Gastrocnemius medialis (tissue), 4 donors: ENCODE measurements at regions of chr5 and their contacts with region 1.

Region 1: DNA sequence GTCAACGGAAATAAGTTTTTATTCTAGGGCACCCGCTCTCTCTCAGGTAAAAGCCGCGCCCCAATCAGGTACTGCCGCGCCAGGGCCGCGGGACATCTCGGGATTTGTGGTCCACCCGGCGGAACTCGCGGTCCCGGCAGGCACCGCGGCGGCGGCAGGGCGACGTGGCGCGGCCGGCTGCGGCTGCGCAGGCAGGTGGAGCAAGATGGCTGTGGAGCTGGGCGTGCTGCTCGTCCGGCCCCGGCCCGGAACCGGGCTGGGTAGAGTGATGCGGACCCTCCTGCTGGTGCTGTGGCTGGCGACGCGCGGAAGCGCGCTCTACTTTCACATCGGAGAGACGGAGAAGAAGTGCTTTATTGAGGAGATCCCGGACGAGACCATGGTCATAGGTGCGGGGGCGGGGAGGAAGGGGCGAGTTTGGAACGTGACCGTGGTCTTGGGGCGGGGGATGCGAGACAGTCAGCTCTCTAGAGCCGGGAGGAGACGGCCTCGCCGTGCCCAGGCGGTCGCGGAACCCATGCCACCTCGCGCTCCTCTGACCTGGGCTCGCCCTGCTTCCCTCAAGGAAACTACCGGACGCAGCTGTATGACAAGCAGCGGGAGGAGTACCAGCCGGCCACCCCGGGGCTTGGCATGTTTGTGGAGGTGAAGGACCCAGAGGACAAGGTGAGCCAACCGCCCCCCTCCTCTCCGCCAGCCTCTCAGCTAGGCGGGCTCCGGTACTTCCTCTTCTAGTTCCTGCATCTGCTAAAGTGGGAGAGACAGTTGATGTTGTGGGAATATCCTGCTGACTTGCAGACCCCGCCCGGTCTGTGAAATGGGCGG is at the start of gene TMED9:
- DNase-seq: peak; percentile 71 to 80
- ATAC-seq: peak; percentile 88 to 97
- H3K4me3 ChIP-seq: peak within 1 kb of the TSS; percentile 86 to 98 (median 94)
- H3K27ac ChIP-seq: peak within 1 kb of the TSS; percentile 79 to 90 (median 86)
- H3K4me1 ChIP-seq: peaks cover 11 to 15% of the 10 kb centered on the region in 2 donors
- H3K27me3 ChIP-seq: peaks cover 0 to 4% (median 0%) of the 10 kb centered on the region in 3 donors
- CTCF ChIP-seq: peak in 2 of 5 experiments; percentile 21 to 36
- POLR2A ChIP-seq: peak; percentile 80 to 93
- total RNA-seq, gene TMED9: 24.3 to 67.2 (median 37.3) TPM

Region 2: GRCh38 chr5:177516604-177517568 is 75.3 kb before region 1 on chr5 and contains the start of gene DDX41:
- in situ Hi-C with region 1: no loop called
- intact Hi-C with region 1: loop called (anchors 2 kb)
- DNase-seq: peak; percentile 98 to 99
- ATAC-seq: peak; percentile 95 to 96
- H3K4me3 ChIP-seq: peak within 1 kb of the TSS; percentile 55 to 98 (median 90)
- H3K27ac ChIP-seq: peak within 1 kb of the TSS; percentile 88 to 94 (median 92)
- H3K4me1 ChIP-seq: peaks cover 15 to 28% of the 10 kb centered on the region in 2 donors
- H3K27me3 ChIP-seq: no peaks in the 10 kb centered on the region
- CTCF ChIP-seq: peak in 3 of 5 experiments; percentile 29 to 43 (median 37)
- POLR2A ChIP-seq: peak; percentile 4 to 25
- total RNA-seq, gene DDX41: 47.1 to 105 (median 62.3) TPM

Region 3: GRCh38 chr5:177554474-177555111 is 37.6 kb before region 1 on chr5 and contains the start of gene FAM193B:
- in situ Hi-C with region 1: no loop called
- intact Hi-C with region 1: loop called (anchors 1 kb)
- DNase-seq: peak; percentile 85 to 91
- ATAC-seq: peak; percentile 90 to 93
- H3K4me3 ChIP-seq: peak within 1 kb of the TSS; percentile 80 to 86 (median 84)
- H3K27ac ChIP-seq: peak within 1 kb of the TSS; percentile 85 to 92 (median 90)
- H3K4me1 ChIP-seq: peaks cover 47 to 54% of the 10 kb centered on the region in 2 donors
- H3K27me3 ChIP-seq: no peaks in the 10 kb centered on the region
- CTCF ChIP-seq: peak in 3 of 5 experiments; percentile 6 to 32 (median 11)
- POLR2A ChIP-seq: peak; percentile 36 to 58
- total RNA-seq, gene FAM193B: 13.2 to 21.3 (median 16.6) TPM